Endothelial cell of umbilical vein (primary cell): ENCODE measurements at regions of chr3 and their contacts with region 1.

Region 1: DNA sequence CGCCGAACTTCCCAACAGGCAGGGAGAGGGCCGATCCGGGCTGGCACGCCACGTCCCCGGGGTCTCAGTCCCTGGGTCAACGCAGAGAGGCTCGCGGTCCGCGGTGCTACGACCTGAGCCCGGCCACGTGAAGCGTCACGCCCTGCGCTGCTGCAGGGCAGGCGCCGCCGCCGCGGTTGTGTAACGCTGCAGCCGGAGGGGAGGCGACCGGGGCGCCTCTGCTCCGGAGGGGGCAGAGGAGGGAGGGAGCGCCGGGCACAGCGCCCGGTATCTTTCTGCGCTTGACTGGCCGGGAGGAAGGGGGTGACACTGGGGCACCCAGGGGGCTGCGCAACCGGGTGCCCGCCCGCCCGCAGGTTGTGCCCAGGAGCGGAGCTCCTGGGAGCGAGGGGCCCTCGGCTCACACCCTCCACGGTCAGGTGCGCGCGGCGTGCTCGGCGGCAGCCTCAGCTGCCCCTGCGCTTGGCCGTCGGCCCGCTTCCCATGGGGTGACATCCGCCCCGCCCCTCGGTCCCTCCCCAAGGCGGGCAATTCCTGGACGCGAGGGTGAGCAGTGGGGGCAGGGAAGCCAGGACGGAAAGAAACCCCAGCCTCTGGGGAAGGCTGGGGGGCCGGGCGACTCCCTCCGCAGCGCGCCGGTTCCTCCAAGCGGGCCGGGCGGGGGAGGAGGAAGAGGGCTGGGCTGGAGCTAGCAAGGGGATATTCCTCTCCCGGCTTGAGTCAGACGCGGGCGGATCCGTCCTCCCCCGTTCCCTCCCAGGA is 852 bp upstream of the BHLHE40 start:
- DNase-seq: peak; percentile 98
- H3K4me3 ChIP-seq: peak overlapping the region; percentile 2 to 65 (median 63)
- H3K27ac ChIP-seq: peak overlapping the region; percentile 98
- H3K4me1 ChIP-seq: peaks cover 42% of the 10 kb centered on the region
- H3K27me3 ChIP-seq: no peaks in the 10 kb centered on the region
- CTCF ChIP-seq: no peak
- POLR2A ChIP-seq: peak; percentile 75

Region 2: GRCh38 chr3:4656059-4656458 is 322.3 kb before region 1 on chr3:
- CTCF ChIA-PET with region 1: interaction called, 5 read pairs
- POLR2A ChIA-PET with region 1: no interaction called
- dilution Hi-C with region 1: no loop called
- intact Hi-C with region 1: loop called (anchors 1 kb)
- DNase-seq: peak; percentile 81
- H3K4me3 ChIP-seq: no peak overlapping the region
- H3K27ac ChIP-seq: peak overlapping the region; percentile 48
- H3K4me1 ChIP-seq: peaks cover 11% of the 10 kb centered on the region
- H3K27me3 ChIP-seq: no peaks in the 10 kb centered on the region
- CTCF ChIP-seq: peak; percentile 91 to 92
- POLR2A ChIP-seq: no peak

Region 3: DNA sequence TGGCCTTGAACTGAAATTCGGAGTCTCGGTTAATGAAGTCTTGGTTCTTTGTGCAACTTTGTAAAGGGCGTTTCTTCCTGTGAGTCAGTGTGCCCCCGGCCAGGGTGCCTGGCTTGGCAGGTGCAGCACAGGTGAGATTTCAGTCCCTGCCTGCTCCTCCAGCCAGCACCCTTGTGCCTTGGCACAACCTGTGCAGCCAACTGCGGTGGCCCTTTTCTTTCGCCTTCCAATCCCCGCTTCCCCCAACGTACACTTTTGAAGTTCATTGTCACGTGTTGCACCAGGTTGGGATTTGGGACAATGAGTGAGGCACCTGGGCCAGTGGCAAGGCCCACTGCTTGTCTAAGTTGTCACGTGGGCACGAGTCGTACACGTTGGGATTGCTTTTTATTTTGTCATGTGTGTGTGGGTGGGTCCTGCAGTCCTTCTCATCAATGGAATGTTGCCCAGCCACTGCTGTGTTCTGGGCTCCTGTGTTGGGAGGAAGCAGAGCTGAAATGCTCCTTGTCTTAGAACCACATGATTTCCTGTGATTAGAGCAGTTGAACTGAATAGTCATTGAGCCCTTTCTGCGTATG is 242.0 kb before region 1 on chr3:
- CTCF ChIA-PET with region 1: interaction called, 6 read pairs
- POLR2A ChIA-PET with region 1: interaction called, 3 read pairs
- dilution Hi-C with region 1: no loop called
- intact Hi-C with region 1: loop called (anchors 1 kb)
- DNase-seq: peak; percentile 79
- H3K4me3 ChIP-seq: no peak overlapping the region
- H3K27ac ChIP-seq: peak overlapping the region; percentile 9
- H3K4me1 ChIP-seq: peaks cover 11% of the 10 kb centered on the region
- H3K27me3 ChIP-seq: no peaks in the 10 kb centered on the region
- CTCF ChIP-seq: no peak
- POLR2A ChIP-seq: no peak

Region 4: DNA sequence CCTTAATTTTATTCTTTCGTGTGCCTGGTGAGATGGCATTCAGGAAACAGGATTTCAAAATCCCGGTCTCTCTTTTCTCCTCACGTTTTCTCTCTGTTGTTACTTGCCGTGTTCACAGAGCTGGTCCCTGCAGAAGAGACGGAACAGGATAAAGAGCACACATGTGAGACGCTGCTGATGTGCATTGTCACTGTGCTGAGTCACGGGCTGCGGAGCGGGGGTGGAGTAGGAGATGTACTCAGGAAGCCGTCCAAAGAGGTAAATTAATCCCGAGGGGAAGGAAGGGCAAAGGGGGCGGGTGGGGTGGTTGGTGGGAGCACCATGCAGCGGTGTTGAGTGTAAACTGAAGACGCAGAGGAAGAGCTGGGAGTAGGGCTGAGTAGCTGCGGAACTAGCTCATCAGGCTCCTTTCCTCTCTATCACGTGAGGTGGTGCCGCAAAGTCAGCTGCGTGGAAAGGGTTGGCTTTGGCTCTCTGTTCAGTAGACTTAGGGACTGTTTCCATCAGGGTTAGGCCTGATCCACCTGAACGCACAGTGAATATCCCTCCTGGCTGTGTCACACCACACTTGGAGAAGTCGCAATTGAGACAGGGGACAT is 164.0 kb before region 1 on chr3:
- CTCF ChIA-PET with region 1: interaction called, 7 read pairs
- POLR2A ChIA-PET with region 1: interaction called, 5 read pairs
- dilution Hi-C with region 1: no loop called
- intact Hi-C with region 1: loop called (anchors 1 kb)
- DNase-seq: peak; percentile 85
- H3K4me3 ChIP-seq: no peak overlapping the region
- H3K27ac ChIP-seq: peak overlapping the region; percentile 74
- H3K4me1 ChIP-seq: peaks cover 18% of the 10 kb centered on the region
- H3K27me3 ChIP-seq: no peaks in the 10 kb centered on the region
- CTCF ChIP-seq: no peak
- POLR2A ChIP-seq: no peak

Region 5: DNA sequence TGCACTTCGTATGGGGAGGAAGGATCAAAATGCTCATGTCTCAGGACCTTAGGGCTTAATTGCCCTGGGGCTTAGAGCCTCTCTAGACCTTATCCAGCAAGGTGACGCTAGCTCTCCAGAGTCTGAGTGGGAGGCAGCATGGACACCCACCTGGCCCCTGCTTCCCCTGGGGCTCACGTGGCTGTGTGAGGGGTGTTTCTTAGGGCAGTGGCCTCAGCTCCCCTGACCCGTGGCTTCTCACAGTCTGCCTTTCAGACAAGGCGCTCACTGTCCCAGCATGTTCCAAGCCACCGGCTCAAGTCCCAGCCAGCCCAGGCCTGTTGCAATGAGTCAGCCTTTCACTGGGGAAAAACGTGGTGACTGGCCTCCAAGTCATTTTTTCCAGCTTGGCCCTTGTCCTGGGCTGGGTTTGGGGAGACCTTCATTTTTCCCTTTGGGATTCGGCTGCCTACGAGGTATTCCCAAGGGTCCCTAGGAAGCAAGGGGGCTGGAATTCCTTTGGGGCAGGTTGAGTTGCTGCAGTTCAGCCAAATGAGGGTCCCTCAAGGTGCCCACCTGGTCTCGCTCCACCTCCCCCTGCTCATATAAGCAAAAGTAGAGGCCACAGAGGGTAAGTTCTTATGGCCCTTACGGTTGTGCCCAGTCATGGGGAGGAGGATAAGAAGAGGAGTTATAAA is 16.6 kb after region 1 on chr3:
- CTCF ChIA-PET with region 1: interaction called, 10 read pairs
- POLR2A ChIA-PET with region 1: interaction called, 3 read pairs
- dilution Hi-C with region 1: no loop called
- intact Hi-C with region 1: no loop called
- DNase-seq: peak; percentile 63
- H3K4me3 ChIP-seq: no peak overlapping the region
- H3K27ac ChIP-seq: peak overlapping the region; percentile 74
- H3K4me1 ChIP-seq: peaks cover 22% of the 10 kb centered on the region
- H3K27me3 ChIP-seq: no peaks in the 10 kb centered on the region
- CTCF ChIP-seq: no peak
- POLR2A ChIP-seq: no peak

Region 6: GRCh38 chr3:5122030-5122740 is 143.8 kb after region 1 on chr3 and contains the start of gene ARL8B:
- CTCF ChIA-PET with region 1: no interaction called
- POLR2A ChIA-PET with region 1: no interaction called
- dilution Hi-C with region 1: no loop called
- intact Hi-C with region 1: loop called (anchors 2 kb)
- DNase-seq: peak; percentile 87
- H3K4me3 ChIP-seq: peak within 1 kb of the TSS; percentile 61 to 95 (median 79)
- H3K27ac ChIP-seq: peak within 1 kb of the TSS; percentile 75
- H3K4me1 ChIP-seq: peaks cover 10% of the 10 kb centered on the region
- H3K27me3 ChIP-seq: no peaks in the 10 kb centered on the region
- CTCF ChIP-seq: peak; percentile 93 to 99
- POLR2A ChIP-seq: peak; percentile 80
- total RNA-seq, gene ARL8B: 58.0 and 58.2 TPM in 2 replicates